Thyroid gland (tissue), 4 donors: ENCODE measurements at regions of chr1 and their contacts with region 1.

Region 1: DNA sequence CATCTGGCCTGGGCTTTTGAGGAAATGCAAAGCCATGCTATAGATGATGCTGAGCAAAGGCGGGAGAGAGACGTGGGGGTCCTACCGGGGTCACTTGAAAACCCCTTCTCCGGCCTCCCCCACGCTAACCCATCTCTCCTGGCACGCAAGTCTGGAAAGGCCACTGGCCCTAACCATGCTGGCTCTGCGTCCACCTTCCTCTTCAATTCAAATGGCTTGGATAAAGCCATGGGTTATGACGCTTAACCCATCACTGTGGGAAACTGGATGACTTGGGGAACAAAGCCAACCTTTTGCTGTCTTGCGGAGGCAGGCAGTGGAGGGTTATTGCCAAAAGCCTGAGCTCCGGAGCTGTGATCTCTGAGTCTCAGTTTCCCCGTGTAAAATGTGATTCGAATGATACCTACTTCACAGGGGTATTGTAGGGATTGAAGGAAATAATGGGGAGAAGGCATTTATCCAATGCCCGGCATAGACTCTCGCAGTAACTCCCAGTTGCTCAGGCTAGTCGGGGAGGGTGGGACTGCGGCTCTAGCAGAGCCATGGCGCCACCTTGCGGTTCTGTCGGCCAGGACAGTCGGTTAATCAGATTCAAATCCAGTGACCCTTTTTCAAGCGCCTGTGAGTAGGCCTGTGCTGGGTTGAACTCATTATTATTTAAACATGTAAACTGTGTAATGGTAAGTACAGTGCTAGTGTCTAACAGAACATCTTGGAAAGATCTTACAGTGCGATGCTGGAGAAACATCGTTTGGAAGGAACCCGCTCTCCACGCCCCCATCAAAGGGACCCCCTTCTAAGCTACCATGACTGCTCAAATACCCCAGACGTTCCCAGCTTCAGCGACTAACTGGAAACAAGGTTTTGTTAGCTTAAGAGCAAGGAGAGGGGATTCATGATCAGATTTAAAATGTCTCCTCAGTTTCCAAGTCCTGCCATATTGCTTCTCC is 20.3 kb downstream of the NEK2 start:
- DNase-seq: peak; percentile 87 to 90
- H3K4me3 ChIP-seq: no peak overlapping the region
- H3K27ac ChIP-seq: no peak overlapping the region
- H3K4me1 ChIP-seq: peaks cover 0 to 3% of the 10 kb centered on the region in 2 donors
- H3K27me3 ChIP-seq: no peaks in the 10 kb centered on the region
- CTCF ChIP-seq: peak; percentile 80 to 94 (median 90)
- POLR2A ChIP-seq: no peak

Region 2: DNA sequence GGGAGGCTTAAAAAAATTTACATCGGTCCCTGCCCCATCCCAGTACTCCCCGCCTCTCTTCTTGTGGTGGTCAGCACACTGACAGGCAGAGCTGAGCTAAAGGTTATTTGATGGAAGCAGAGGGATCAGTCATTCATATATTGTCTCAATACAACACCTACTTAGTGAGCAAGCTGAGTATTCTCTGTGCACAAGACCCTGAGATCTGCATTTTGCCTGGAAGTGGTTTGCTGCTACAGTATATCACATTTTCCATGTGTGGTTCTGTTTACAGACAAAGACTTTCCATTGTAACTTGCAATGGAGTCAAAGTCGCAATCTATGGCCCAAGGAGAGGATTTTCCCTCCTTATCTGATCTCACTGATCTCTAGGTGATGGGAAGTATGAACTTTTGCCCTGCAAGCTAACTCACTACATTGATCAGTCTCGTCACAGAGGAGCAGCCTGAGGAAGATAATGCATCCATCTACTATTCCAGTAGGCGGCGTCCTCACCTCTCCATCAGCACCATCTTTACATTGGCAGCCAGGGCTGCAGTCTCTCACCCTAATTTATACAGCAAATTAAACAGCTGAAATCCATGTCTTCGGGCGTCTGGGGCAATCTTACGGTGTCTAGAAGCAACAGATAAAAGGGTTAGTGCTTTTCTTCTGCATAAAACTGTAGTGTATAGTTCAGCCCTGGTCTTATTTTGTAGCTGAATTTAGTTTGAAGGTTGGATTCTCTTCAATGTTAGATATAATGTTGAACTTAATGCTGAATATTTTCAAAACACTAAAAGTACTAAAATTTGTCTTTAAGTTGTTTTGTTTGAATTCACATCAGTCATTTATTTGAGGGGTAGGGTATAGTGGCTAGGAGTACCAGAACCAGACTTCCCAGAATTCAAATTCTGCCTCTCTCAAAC is 331.7 kb before region 1 on chr1:
- intact Hi-C with region 1: loop called (anchors 5 kb)
- DNase-seq: peak; percentile 46 to 51
- H3K4me3 ChIP-seq: no peak overlapping the region
- H3K27ac ChIP-seq: no peak overlapping the region
- H3K4me1 ChIP-seq: no peaks in the 10 kb centered on the region
- H3K27me3 ChIP-seq: no peaks in the 10 kb centered on the region
- CTCF ChIP-seq: peak; percentile 31 to 79 (median 64)
- POLR2A ChIP-seq: no peak

Region 3: GRCh38 chr1:211469938-211470529 is 185.1 kb before region 1 on chr1:
- intact Hi-C with region 1: loop called (anchors 5 kb)
- DNase-seq: peak; percentile 88 to 90
- H3K4me3 ChIP-seq: no peak overlapping the region
- H3K27ac ChIP-seq: no peak overlapping the region
- H3K4me1 ChIP-seq: peaks cover 8 to 9% of the 10 kb centered on the region in 2 donors
- H3K27me3 ChIP-seq: no peaks in the 10 kb centered on the region
- CTCF ChIP-seq: peak; percentile 58 to 88 (median 74)
- POLR2A ChIP-seq: no peak

Region 4: DNA sequence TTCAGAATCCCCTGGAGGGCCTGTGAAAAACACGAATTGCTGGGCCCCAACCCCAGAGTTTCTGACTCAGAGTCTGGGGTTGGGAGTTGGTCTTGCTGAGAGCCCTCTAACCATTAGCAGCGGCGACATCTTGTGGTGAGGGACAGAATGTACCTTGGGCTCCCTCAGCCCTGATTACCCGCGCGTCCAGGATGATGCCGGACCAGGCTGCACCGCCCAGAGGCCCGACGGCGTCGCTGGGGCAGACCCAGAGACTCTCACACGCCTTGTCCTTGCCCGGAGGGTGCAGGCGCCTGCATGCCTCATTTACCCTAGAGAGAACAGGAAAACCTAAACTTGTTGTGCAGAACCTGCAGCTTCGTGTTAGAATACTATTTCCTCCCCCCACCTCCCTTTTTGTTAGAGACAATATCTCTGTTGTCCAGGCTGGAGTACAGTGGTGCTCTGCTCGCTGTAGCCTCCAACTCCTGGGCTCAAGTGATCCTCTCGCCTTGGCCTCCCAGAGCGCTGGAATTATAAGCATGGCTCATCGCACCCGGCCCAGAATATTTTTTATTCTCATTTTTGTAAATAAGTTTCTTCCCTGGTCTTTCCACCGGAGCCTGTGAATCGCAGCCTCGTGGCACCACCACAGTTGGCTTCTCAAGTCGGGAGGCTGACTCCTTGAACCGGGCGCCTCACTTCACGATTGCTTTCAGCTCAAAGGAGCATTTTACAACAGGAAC is 140.9 kb before region 1 on chr1:
- intact Hi-C with region 1: loop called (anchors 2 kb)
- DNase-seq: peak; percentile 77 to 82
- H3K4me3 ChIP-seq: no peak overlapping the region
- H3K27ac ChIP-seq: no peak overlapping the region
- H3K4me1 ChIP-seq: peaks cover 0 to 4% of the 10 kb centered on the region in 2 donors
- H3K27me3 ChIP-seq: no peaks in the 10 kb centered on the region
- CTCF ChIP-seq: peak in 5 of 6 experiments; percentile 49 to 82 (median 66)
- POLR2A ChIP-seq: no peak

Region 5: DNA sequence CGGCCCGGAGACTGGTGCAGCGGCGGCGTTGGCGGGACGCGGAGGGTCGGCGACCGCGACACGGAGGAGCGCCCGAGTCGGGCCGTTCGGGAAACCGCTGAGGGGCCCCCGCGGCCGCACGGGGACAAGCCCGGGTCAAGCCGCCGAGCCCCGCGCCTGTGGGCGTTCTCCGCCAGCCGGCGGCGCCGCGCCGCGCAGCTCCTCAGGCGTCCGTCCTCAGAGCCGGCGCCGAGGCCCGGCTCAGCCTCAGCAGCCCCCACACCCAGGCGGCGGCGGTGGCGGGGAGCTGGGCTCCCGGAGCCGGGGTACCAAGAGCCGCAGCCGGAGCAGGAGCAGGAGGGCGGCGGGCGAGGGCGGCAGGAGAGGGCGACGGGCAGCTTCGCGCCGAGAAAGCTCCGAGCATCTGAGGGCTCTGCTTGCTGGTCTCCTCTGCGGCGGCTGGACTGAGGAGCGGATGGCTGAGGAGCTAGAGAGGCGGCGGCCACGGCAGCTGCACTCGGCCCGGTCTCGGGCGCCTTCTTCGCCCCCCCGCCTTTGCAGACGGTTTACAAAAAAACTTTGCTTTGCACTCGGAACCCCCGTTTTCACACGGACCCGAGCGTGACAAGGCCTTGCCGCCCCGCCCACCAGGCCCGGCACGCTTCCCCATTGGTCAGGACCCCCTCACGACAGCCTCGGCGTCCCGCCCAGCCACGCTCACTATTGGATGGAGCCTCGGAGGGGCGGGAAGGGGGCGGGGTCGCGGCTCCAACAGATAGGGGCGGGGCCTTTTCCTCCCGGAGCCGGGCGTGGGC is 76.3 kb before region 1 on chr1 and contains the start of gene SLC30A1:
- intact Hi-C with region 1: loop called (anchors 5 kb)
- DNase-seq: peak; percentile 100
- H3K4me3 ChIP-seq: peak within 1 kb of the TSS; percentile 37 to 97 (median 70)
- H3K27ac ChIP-seq: peak within 1 kb of the TSS; percentile 88 to 93 (median 88)
- H3K4me1 ChIP-seq: peaks cover 15 to 23% of the 10 kb centered on the region in 2 donors
- H3K27me3 ChIP-seq: no peaks in the 10 kb centered on the region
- CTCF ChIP-seq: no peak
- POLR2A ChIP-seq: peak; percentile 67 to 96
- total RNA-seq, gene SLC30A1: 22.7 to 36.0 (median 32.4) TPM